ENCODE measurements at regions of chr9 and their contacts with region 1.

Region 1: DNA sequence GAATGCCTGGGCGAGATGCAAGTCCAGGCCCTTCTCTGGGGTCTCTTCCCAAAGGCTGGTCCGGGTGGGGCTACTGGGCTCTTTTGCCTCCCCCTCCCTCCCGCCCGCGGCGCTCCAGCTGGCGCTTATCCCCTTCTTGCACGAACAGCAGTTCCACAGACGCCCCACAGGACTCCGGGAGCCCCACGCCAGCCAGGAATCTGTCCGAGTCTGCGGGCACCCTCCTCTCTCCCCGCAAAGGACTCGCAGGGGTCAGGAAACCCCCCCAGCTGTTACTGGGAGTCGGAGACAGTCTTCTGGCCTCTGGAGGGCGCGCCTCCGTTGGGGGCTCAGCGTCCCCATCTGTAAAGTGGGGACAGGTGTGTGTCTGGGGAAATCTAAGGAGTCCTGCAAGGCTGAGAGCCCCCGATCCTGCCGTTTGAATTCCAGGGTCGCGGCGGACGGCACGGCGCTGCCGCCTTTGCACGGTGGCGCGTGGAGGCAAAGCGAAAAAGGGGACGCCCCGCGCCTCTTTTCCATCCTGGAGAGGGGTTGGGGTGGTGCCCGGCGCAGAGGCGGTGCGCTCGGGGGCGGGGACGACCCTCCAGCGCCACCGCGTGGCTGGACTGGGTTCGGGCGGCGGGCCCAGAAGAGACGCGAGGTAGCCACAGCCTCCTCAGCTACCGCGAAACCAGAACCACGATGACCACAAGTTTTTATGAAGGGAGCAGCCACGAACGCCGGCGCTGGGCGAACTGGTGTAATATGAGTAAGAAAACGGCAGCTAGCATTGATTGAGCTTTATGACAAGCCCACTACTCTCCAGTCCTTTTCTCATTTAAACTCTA is 2.9 kb upstream of the CCIN start:
- DNase-seq: peak; percentile 72
- H3K4me3 Mint-ChIP-seq: peak overlapping the region; percentile 63
- H3K27ac Mint-ChIP-seq: no peak overlapping the region
- H3K4me1 Mint-ChIP-seq: peaks cover 3% of the 10 kb centered on the region
- H3K27me3 Mint-ChIP-seq: no peaks in the 10 kb centered on the region
- CTCF ChIP-seq: peak; percentile 90

Region 2: DNA sequence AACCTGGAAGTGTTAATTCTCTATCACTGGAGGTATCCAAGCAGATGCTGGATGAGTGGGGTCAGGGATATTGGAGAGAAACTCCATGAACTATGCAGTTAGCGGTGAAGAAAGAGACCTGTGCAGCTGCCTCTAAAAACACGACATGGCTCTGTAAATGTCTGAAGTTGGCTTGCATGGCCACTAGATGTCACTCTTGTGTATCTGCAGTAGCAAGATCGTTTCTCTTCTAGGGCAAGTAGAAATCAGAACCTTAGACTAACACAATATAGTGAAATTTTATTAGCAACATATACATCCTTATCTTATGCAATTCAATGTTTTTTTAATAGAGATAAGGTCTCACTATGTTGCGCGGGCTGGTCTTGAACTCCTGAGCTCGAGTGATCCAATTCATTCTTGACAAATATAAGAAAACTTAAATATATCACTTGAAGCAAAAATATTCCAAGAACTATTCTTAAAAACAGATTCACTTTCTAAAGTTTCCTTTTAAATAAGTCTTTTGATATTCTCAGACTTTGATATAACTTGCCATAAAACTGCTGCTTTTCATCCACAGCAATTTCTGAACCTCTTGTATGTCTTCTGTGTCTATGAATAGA is 211.3 kb before region 1 on chr9:
- CTCF ChIA-PET with region 1: interaction called, 27 read pairs
- POLR2A ChIA-PET with region 1: no interaction called
- intact Hi-C with region 1: no loop called
- DNase-seq: peak; percentile 72
- H3K4me3 Mint-ChIP-seq: no peak overlapping the region
- H3K27ac Mint-ChIP-seq: no peak overlapping the region
- H3K4me1 Mint-ChIP-seq: peaks cover 7% of the 10 kb centered on the region
- H3K27me3 Mint-ChIP-seq: peaks cover 31% of the 10 kb centered on the region
- CTCF ChIP-seq: peak; percentile 83

Region 3: DNA sequence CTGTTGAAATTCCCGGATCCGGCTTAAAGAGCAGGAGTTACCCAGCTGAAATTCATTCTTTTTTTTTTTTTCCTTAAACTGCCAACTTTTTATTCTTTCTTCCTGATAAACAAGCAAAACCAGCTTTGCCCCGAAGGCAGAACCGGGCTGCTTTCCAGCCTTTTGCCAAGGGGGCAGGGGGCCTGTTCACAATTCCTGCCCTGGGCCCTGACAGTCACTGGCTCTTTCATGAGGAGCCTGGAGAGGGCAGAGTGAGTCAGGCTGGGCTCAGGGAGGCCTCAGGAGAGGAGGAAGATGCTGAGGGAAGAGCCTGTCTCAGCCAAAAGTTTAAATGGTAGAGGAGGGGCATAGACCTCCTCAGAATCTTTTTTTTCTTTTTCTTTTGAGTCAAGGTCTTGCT is 25.0 kb before region 1 on chr9:
- CTCF ChIA-PET with region 1: interaction called, 8 read pairs
- POLR2A ChIA-PET with region 1: no interaction called
- intact Hi-C with region 1: loop called (anchors 1 kb)
- DNase-seq: peak; percentile 50
- H3K4me3 Mint-ChIP-seq: no peak overlapping the region
- H3K27ac Mint-ChIP-seq: no peak overlapping the region
- H3K4me1 Mint-ChIP-seq: peaks cover 11% of the 10 kb centered on the region
- H3K27me3 Mint-ChIP-seq: peaks cover 50% of the 10 kb centered on the region
- CTCF ChIP-seq: peak; percentile 30

Region 4: DNA sequence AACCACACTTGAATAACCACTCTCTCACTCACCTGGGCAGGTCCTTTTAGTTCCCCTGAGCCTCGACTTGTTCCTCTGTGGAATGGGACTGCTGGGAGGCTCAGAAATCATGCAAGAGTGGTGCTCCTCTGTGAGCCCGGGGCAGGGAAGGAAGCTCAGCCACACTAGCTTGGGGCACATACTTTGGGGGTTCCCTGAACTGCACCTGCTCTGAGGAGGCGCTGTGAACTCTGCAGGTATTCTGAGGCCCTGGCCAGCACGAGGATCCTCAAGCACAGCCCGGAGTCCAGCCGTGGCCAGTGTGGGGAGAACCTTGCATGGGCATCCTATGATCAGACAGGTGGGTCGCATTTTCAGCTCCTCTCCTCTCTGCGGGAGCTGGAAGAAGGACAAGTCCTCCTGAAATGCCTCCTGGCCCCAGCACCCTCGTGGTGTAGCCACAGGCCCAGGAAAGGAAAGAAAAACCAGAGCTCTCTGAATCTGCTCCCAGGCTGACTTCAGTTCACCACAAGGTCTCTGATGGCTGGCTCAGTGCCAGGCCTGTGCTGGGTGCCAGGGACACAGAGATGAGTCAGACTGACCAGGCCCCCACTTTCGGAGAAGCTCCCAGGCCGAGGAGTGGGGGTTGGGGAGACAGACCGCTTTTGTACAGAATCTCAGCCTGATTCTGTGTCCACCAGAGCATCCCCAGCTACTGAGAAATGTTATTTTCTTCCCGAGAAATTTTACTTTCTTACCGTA is 17.8 kb before region 1 on chr9:
- CTCF ChIA-PET with region 1: interaction called, 20 read pairs
- POLR2A ChIA-PET with region 1: interaction called, 3 read pairs
- intact Hi-C with region 1: no loop called
- DNase-seq: peak; percentile 98
- H3K4me3 Mint-ChIP-seq: no peak overlapping the region
- H3K27ac Mint-ChIP-seq: no peak overlapping the region
- H3K4me1 Mint-ChIP-seq: no peaks in the 10 kb centered on the region
- H3K27me3 Mint-ChIP-seq: peaks cover 23% of the 10 kb centered on the region
- CTCF ChIP-seq: no peak

Region 5: GRCh38 chr9:36156116-36156515 is 10.2 kb before region 1 on chr9:
- CTCF ChIA-PET with region 1: interaction called, 13 read pairs
- POLR2A ChIA-PET with region 1: interaction called, 3 read pairs
- intact Hi-C with region 1: no loop called
- DNase-seq: no peak
- H3K4me3 Mint-ChIP-seq: no peak overlapping the region
- H3K27ac Mint-ChIP-seq: no peak overlapping the region
- H3K4me1 Mint-ChIP-seq: peaks cover 3% of the 10 kb centered on the region
- H3K27me3 Mint-ChIP-seq: no peaks in the 10 kb centered on the region
- CTCF ChIP-seq: no peak

Measured in MCF 10A (cell line).